CD8-positive, alpha-beta T cell (primary cell): ENCODE measurements at regions of chr6 and their contacts with region 1.

Region 1: GRCh38 chr6:13336553-13336952 is 8.2 kb upstream of the TBC1D7 start:
- DNase-seq: peak; percentile 57 to 83 (median 71)
- ATAC-seq: peak; percentile 94
- H3K4me3 ChIP-seq: no peak overlapping the region
- H3K4me3 Mint-ChIP-seq: no peak overlapping the region
- H3K27ac ChIP-seq: no peak overlapping the region
- H3K27ac Mint-ChIP-seq: no peak overlapping the region
- H3K4me1 ChIP-seq: no peaks in the 10 kb centered on the region
- H3K4me1 Mint-ChIP-seq: peaks cover 7% of the 10 kb centered on the region
- H3K27me3 ChIP-seq: no peaks in the 10 kb centered on the region
- H3K27me3 Mint-ChIP-seq: no peaks in the 10 kb centered on the region
- CTCF ChIP-seq: peak; percentile 83

Region 2: DNA sequence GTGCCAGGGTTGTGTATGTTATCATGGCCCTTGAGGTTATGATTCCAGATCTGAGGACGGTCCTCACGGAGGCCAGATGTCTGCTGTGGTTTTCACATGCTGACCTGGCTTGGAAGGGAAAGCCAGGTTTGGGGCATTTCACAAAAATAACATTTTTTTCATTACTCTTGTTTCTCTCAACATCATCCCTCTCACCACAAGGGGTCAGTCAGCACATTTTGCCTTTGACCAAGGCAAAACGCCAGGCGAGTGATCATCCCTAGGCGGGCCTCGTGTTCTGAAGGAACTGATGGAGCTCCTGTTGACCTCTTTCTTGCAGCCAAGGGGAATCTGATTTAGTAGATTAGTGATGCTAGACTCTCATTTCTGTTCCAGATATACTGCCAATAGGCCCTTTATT is 141.7 kb before region 1 on chr6:
- CTCF ChIA-PET with region 1: interaction called, 4 read pairs
- POLR2A ChIA-PET with region 1: no interaction called
- intact Hi-C with region 1: loop called (anchors 2 to 5 kb)
- DNase-seq: peak in 2 of 9 experiments; percentile 30 to 44
- ATAC-seq: no peak
- H3K4me3 ChIP-seq: no peak overlapping the region
- H3K4me3 Mint-ChIP-seq: no peak overlapping the region
- H3K27ac ChIP-seq: no peak overlapping the region
- H3K27ac Mint-ChIP-seq: no peak overlapping the region
- H3K4me1 ChIP-seq: no peaks in the 10 kb centered on the region
- H3K4me1 Mint-ChIP-seq: no peaks in the 10 kb centered on the region
- H3K27me3 ChIP-seq: no peaks in the 10 kb centered on the region
- H3K27me3 Mint-ChIP-seq: peaks cover 10% of the 10 kb centered on the region
- CTCF ChIP-seq: no peak

Region 3: GRCh38 chr6:13383328-13384163 is 47.0 kb after region 1 on chr6:
- CTCF ChIA-PET with region 1: interaction called, 5 read pairs
- POLR2A ChIA-PET with region 1: no interaction called
- intact Hi-C with region 1: loop called in 1 of 2 experiments (anchors 5 kb)
- DNase-seq: peak in 2 of 9 experiments; percentile 72 to 83
- ATAC-seq: peak; percentile 80
- H3K4me3 ChIP-seq: no peak overlapping the region
- H3K4me3 Mint-ChIP-seq: no peak overlapping the region
- H3K27ac ChIP-seq: peak overlapping the region in 1 of 2 experiments; percentile 58
- H3K27ac Mint-ChIP-seq: no peak overlapping the region
- H3K4me1 ChIP-seq: no peaks in the 10 kb centered on the region
- H3K4me1 Mint-ChIP-seq: peaks cover 17% of the 10 kb centered on the region
- H3K27me3 ChIP-seq: no peaks in the 10 kb centered on the region
- H3K27me3 Mint-ChIP-seq: no peaks in the 10 kb centered on the region
- CTCF ChIP-seq: no peak

Region 4: GRCh38 chr6:13454286-13455221 is 118.0 kb after region 1 on chr6:
- CTCF ChIA-PET with region 1: interaction called, 4 read pairs
- POLR2A ChIA-PET with region 1: no interaction called
- intact Hi-C with region 1: loop called in 1 of 2 experiments (anchors 1 kb)
- DNase-seq: peak; percentile 31 to 92 (median 70)
- ATAC-seq: peak; percentile 80
- H3K4me3 ChIP-seq: peak overlapping the region; percentile 10 to 26
- H3K4me3 Mint-ChIP-seq: peak overlapping the region; percentile 62
- H3K27ac ChIP-seq: peak overlapping the region; percentile 18 to 77
- H3K27ac Mint-ChIP-seq: peak overlapping the region; percentile 90
- H3K4me1 ChIP-seq: peaks cover 31% of the 10 kb centered on the region
- H3K4me1 Mint-ChIP-seq: peaks cover 36% of the 10 kb centered on the region
- H3K27me3 ChIP-seq: no peaks in the 10 kb centered on the region
- H3K27me3 Mint-ChIP-seq: no peaks in the 10 kb centered on the region
- CTCF ChIP-seq: peak; percentile 25

Region 5: DNA sequence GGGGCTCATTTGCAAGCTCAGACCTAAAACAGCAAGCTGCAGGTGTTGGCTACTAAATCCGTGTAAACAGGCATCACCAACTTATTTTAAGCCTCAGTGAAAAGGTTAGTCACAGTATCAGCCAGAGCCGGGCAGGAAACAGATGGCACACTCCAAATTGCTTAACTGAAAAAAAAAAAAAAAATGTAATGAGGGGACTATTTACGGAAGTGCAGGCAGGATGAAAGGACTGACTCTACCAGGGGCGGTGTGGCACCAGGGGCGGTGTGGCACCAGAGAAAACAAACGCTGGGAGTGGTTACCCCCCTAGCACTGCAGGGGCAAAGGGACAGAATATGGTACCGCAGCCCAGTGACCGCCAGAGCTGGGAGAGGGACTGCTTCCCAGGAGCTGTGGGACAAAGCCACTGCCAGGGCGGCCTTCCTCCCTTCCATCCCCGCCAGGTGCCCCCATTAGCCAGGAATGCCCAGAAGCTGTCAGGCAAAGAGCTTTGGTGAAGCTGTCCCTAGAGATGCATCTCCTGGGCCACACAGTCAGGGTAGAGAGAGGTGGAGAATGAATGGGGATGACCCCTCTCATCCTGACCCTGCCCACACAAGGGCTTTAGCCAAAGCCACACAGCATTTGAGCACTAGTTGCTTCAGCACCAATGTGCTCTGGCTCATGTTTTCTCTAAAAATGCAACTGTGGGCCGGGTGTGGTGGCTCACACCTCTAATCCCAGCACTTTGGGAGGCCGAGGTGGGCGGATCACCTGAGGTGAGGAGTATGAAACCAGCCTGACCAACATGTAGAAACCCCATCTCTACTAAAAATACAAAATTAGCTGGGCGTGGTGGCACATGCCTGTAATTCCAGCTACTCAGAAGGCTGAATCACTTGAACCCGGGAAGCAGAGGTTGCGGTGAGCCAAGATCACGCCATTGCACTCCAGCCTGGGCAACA is 190.4 kb after region 1 on chr6:
- CTCF ChIA-PET with region 1: interaction called, 3 read pairs
- POLR2A ChIA-PET with region 1: no interaction called
- intact Hi-C with region 1: loop called in 1 of 2 experiments (anchors 2 kb)
- DNase-seq: peak in 8 of 9 experiments; percentile 19 to 77 (median 50)
- ATAC-seq: peak; percentile 94
- H3K4me3 ChIP-seq: no peak overlapping the region
- H3K4me3 Mint-ChIP-seq: no peak overlapping the region
- H3K27ac ChIP-seq: no peak overlapping the region
- H3K27ac Mint-ChIP-seq: peak overlapping the region; percentile 25
- H3K4me1 ChIP-seq: peaks cover 16% of the 10 kb centered on the region
- H3K4me1 Mint-ChIP-seq: peaks cover 20% of the 10 kb centered on the region
- H3K27me3 ChIP-seq: no peaks in the 10 kb centered on the region
- H3K27me3 Mint-ChIP-seq: no peaks in the 10 kb centered on the region
- CTCF ChIP-seq: no peak

Region 6: DNA sequence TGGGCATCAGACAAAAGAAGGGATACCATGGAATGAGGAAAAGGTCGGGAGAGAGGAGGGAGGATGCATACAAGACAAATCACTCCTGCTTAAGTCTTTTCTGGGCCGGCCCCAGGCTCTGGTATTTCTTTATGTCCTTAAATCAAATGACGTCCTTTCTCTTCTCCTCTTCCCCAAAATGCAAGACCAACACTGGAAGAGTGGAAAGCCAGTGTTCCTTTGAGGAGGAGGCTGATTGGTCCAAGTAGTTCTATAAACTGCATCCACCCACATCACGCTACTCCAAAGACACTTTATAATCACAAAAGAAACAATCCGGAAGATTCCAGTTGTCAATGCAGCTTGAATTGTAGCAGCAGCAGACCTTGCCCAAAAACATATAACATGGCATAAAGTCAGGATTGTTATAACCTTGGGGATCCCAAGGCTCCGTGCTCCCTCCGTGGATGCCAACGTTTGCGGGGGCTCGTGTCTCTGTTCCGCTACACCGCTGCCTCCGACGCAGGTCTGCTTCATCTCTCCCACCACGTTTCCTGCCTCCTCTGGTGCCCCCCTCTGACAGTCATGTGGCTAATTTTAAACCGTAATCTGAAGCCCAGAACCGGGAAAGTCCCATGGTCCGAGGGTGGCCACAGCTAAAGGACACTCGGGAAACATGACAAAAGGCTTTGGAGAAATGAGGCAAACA is 430.7 kb after region 1 on chr6:
- CTCF ChIA-PET with region 1: interaction called, 3 read pairs
- POLR2A ChIA-PET with region 1: no interaction called
- intact Hi-C with region 1: loop called (anchors 2 to 5 kb)
- DNase-seq: peak; percentile 11 to 77 (median 53)
- ATAC-seq: peak; percentile 83
- H3K4me3 ChIP-seq: peak overlapping the region; percentile 16 to 21
- H3K4me3 Mint-ChIP-seq: peak overlapping the region; percentile 73
- H3K27ac ChIP-seq: no peak overlapping the region
- H3K27ac Mint-ChIP-seq: no peak overlapping the region
- H3K4me1 ChIP-seq: peaks cover 18% of the 10 kb centered on the region
- H3K4me1 Mint-ChIP-seq: peaks cover 33% of the 10 kb centered on the region
- H3K27me3 ChIP-seq: no peaks in the 10 kb centered on the region
- H3K27me3 Mint-ChIP-seq: no peaks in the 10 kb centered on the region
- CTCF ChIP-seq: peak; percentile 10

Region 7: GRCh38 chr6:14066782-14067406 is 730.3 kb after region 1 on chr6:
- CTCF ChIA-PET with region 1: interaction called, 4 read pairs
- POLR2A ChIA-PET with region 1: no interaction called
- intact Hi-C with region 1: loop called (anchors 5 kb)
- DNase-seq: peak in 3 of 9 experiments; percentile 8 to 74 (median 64)
- ATAC-seq: peak; percentile 78
- H3K4me3 ChIP-seq: no peak overlapping the region
- H3K4me3 Mint-ChIP-seq: no peak overlapping the region
- H3K27ac ChIP-seq: no peak overlapping the region
- H3K27ac Mint-ChIP-seq: no peak overlapping the region
- H3K4me1 ChIP-seq: no peaks in the 10 kb centered on the region
- H3K4me1 Mint-ChIP-seq: no peaks in the 10 kb centered on the region
- H3K27me3 ChIP-seq: peaks cover 0 to 3% of the 10 kb centered on the region in 2 experiments
- H3K27me3 Mint-ChIP-seq: peaks cover 10% of the 10 kb centered on the region
- CTCF ChIP-seq: peak; percentile 60